A549 (cell line): ENCODE measurements at regions of chr17 and their contacts with region 1.

Region 1: GRCh38 chr17:49788478-49789242 is at the start of gene KAT7:
- DNase-seq: peak; percentile 96 to 100
- ATAC-seq: peak; percentile 95 to 98
- H3K4me3 ChIP-seq: peak within 1 kb of the TSS; percentile 82
- H3K27ac ChIP-seq: peak within 1 kb of the TSS; percentile 92 to 93
- H3K4me1 ChIP-seq: peaks cover 9% of the 10 kb centered on the region
- CTCF ChIP-seq: no peak
- EP300 ChIP-seq: no peak
- POLR2A ChIP-seq: peak; percentile 63
- RAD21 ChIP-seq: no peak
- polyA plus RNA-seq, gene KAT7: 48.7 and 55.8 TPM in 2 replicates

Region 2: DNA sequence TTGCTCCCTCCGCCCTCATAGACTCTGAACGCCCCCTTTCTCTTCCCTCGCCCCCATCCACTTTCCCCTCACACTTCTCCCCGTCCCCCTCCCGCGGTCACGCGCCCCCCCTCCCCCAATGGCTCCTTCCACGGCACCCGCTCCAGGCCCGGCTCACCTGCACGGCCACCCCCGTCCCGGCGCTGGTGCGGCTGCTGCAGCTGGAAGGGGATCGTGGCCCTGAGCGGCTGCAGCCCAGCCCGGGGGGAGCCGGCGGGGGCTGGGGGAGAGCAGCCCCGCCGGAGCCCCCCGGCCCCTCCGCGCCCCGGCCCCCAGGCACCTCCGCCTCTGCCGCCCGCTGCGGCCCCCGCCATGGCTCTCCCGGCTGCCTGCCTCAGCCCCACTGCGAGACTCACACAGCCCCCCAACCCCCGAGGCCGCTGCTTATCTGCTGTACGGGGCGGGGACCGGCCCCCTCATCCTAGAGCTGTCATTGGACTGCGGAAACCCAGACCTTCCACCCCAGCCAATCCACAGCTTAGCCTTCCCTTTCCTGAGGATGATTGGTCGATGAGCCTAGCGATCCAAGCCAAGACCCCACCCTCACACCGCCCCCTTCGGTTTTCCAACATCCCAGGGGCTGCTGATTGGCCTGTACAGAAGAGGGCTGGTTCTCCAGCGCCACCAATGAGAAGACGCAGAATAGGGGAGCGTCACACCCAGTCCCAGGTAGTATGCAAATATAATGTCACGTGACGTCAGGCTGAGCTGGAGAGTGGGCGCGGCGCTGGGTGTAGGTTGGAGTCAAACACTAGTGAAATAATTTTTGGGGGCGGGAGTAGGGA is 24.7 kb before region 1 on chr17 and contains the start of gene FAM117A:
- CTCF ChIA-PET with region 1: interaction called, 3 read pairs
- POLR2A ChIA-PET with region 1: interaction called, 12 read pairs
- DNase-seq: peak; percentile 99 to 100
- ATAC-seq: peak; percentile 98 to 99
- H3K4me3 ChIP-seq: peak within 1 kb of the TSS; percentile 61
- H3K27ac ChIP-seq: peak within 1 kb of the TSS; percentile 57 to 89
- H3K4me1 ChIP-seq: peaks cover 9% of the 10 kb centered on the region
- CTCF ChIP-seq: no peak
- EP300 ChIP-seq: no peak
- POLR2A ChIP-seq: peak; percentile 44; the same call in 1 of the 2 replicates
- RAD21 ChIP-seq: no peak
- polyA plus RNA-seq, gene FAM117A: 1.8 TPM in 2 replicates

Region 3: GRCh38 chr17:49815761-49816281 is 27.2 kb after region 1 on chr17:
- CTCF ChIA-PET with region 1: interaction called, 11 read pairs
- POLR2A ChIA-PET with region 1: interaction called, 4 read pairs
- DNase-seq: no peak
- ATAC-seq: no peak
- H3K4me3 ChIP-seq: no peak overlapping the region
- H3K27ac ChIP-seq: no peak overlapping the region
- H3K4me1 ChIP-seq: no peaks in the 10 kb centered on the region
- CTCF ChIP-seq: no peak
- EP300 ChIP-seq: no peak
- POLR2A ChIP-seq: no peak
- RAD21 ChIP-seq: no peak

Region 4: DNA sequence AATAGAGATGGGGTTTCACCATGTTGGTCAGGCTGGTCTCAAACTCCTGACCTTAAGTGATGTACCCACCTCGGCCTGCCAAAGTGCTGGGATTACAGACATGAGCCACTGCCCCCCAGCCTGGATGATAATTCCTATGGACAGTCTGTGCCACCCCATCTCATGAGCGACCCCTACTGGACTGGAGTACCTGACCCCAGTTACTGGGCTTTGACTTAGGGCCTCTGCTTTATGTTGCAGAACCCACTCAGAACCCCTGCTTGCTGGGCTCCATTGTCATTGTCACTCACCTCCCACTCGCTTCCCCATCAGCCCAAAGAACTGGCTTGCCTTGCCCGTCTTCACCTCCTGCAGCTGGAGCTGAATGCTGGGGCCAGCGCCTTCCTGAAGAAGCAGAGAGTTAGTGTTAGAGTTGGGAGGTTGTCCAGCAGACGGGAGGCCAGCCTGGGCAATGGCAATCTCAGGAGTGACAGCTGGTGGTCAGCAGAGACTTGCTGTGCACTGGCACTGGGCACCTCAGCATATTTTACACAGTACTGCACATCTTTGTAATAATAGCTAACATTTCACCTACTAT is 55.2 kb after region 1 on chr17:
- CTCF ChIA-PET with region 1: no interaction called
- POLR2A ChIA-PET with region 1: no interaction called
- DNase-seq: peak; percentile 52 to 69
- ATAC-seq: peak in 1 of 2 experiments; percentile 74; a peak in 3 of 6 replicates
- H3K4me3 ChIP-seq: no peak overlapping the region
- H3K27ac ChIP-seq: no peak overlapping the region
- H3K4me1 ChIP-seq: peaks cover 7% of the 10 kb centered on the region; the same call in 1 of the 3 replicates
- CTCF ChIP-seq: peak; percentile 46
- EP300 ChIP-seq: no peak
- POLR2A ChIP-seq: no peak
- RAD21 ChIP-seq: peak; percentile 35 to 52; a peak in 3 of 5 replicates